ENCODE measurements at regions of chr19 and their contacts with region 1.

Region 1: DNA sequence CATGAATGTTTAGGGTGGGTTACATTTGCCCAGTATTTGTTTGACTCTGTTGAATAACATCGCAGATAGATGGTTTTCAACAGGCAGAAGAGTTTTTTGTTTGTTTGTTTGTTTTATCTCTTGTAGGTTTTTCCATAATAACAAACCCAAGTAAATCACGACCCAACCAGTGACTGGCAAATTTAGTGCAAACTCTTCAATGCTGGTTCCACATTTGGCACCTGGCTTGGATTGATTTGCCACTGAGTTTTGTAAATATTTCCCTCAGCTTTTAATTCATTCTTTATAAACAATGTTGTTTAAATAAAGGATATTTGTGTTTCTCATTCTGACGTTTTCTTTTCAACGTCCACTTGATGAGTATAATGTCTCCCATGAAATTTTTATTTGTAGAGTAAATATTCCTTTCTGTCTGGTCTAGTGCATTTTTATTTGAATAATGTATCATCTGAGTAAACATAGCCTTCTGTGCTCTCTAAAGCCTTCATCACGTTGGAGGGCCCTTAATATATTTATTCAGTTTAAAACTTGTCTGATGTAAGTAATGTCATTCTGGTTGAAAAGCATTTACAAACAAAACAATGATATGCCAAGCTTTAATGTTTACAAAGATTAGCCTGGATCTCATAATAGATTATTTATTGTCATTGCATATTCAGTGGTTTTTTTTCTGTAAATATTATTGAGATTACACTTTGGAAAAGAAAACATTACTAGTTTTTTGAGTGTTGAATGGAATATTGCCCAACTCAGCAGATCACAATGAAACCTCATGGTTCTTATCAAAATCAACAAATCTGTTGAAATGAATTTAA is 90.3 kb upstream of the PEG3 start:
- DNase-seq: no peak
- ATAC-seq: no peak
- H3K4me3 ChIP-seq: no peak overlapping the region
- H3K27ac ChIP-seq: no peak overlapping the region
- H3K4me1 ChIP-seq: no peaks in the 10 kb centered on the region
- H3K27me3 ChIP-seq: peaks cover 0 to 5% (median 0%) of the 10 kb centered on the region in 9 donors
- CTCF ChIP-seq: no peak
- POLR2A ChIP-seq: no peak

Region 2: GRCh38 chr19:56594783-56595547 is 335.9 kb before region 1 on chr19 and contains the start of gene ZNF71:
- intact Hi-C with region 1: no loop called
- DNase-seq: peak; percentile 93 to 96 (median 93)
- ATAC-seq: peak; percentile 88 to 99 (median 98)
- H3K4me3 ChIP-seq: peak within 1 kb of the TSS; percentile 65 to 100 (median 88)
- H3K27ac ChIP-seq: peak within 1 kb of the TSS in 11 of 12 donors; percentile 61 to 86 (median 76)
- H3K4me1 ChIP-seq: peaks cover 0 to 24% (median 8%) of the 10 kb centered on the region in 12 donors
- H3K27me3 ChIP-seq: no peaks in the 10 kb centered on the region
- CTCF ChIP-seq: no peak
- POLR2A ChIP-seq: peak in 1 of 2 donors; percentile 64
- total RNA-seq, gene ZNF71: 5.3 to 15.3 (median 7.1) TPM

Region 3: GRCh38 chr19:56973713-56974555 is 43.1 kb after region 1 on chr19:
- intact Hi-C with region 1: loop called in 1 of 10 experiments (anchors 2 kb)
- DNase-seq: no peak
- ATAC-seq: no peak
- H3K4me3 ChIP-seq: no peak overlapping the region
- H3K27ac ChIP-seq: no peak overlapping the region
- H3K4me1 ChIP-seq: no peaks in the 10 kb centered on the region
- H3K27me3 ChIP-seq: peaks cover 0 to 39% (median 4%) of the 10 kb centered on the region in 9 donors
- CTCF ChIP-seq: no peak
- POLR2A ChIP-seq: no peak